Activated naive CD4-positive, alpha-beta T cell treated with anti-CD3 and anti-CD28 coated beads, Interleukin-2, amount 10 ng/mL, durations not matched to agents 7 days and 5 days (primary cell): ENCODE measurements at regions of chr1 and their contacts with region 1.

Region 1: DNA sequence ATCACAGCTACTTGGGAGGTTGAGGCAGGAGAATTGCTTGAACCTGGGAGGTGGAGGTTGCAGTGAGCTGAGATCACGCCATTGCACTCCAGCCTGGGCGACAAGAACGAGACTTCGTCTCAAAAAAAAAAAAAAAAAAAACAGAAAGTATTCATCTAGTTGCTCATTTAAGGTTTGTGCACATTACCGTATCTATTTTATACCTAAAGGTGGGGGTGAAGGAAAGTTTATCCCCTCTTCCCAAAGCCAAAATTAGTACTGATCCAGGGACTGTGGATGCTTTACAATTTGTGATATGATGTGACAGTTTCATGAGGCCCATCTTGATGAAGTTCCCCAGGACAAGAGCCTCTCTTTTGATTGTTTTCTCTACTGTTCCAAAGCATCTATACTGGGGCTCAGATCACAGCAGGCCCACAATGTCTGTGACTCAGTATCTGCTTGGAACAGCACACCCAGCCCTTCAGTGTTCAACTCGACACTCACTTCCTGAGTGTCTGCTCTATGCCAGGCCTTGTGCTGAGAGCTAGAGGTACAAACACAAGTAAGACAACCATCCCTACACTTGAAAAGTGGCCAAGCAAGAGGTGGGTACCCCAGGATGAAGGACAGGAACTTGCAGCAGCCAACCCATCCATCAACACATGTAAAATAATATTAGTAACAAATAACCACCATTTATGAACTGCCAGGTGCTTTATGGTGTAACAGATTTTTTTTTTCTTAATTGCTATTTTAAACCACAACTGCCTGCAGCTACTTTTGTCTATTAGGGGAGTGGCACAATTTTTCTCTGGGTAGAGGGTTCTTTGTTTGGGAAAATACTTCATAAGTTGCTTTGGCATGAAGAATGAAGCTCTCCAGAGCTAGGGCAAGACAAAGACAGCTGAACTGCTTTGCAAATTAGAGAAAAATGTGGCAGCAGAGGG is 29.0 kb upstream of the KHDRBS1 start:
- DNase-seq: peak; percentile 45
- H3K4me3 Mint-ChIP-seq: peak overlapping the region; percentile 15
- H3K27ac Mint-ChIP-seq: peak overlapping the region; percentile 96
- H3K4me1 Mint-ChIP-seq: peaks cover 65% of the 10 kb centered on the region
- H3K27me3 Mint-ChIP-seq: peaks cover 4% of the 10 kb centered on the region

Region 2: GRCh38 chr1:32005522-32005921 is 20.8 kb after region 1 on chr1:
- CTCF ChIA-PET with region 1: interaction called, 12 read pairs
- DNase-seq: no peak
- H3K4me3 Mint-ChIP-seq: no peak overlapping the region
- H3K27ac Mint-ChIP-seq: no peak overlapping the region
- H3K4me1 Mint-ChIP-seq: peaks cover 13% of the 10 kb centered on the region
- H3K27me3 Mint-ChIP-seq: peaks cover 10% of the 10 kb centered on the region